Calu3 (cell line): ENCODE measurements at regions of chr21 and their contacts with region 1.

Region 1: GRCh38 chr21:34836103-34836932 is 167.5 kb downstream of the CLIC6 start:
- DNase-seq: peak; percentile 74
- H3K4me3 Mint-ChIP-seq: peak overlapping the region; percentile 65
- H3K27ac Mint-ChIP-seq: peak overlapping the region; percentile 95
- H3K4me1 Mint-ChIP-seq: peaks cover 42% of the 10 kb centered on the region
- H3K27me3 Mint-ChIP-seq: no peaks in the 10 kb centered on the region
- CTCF ChIP-seq: no peak

Region 2: DNA sequence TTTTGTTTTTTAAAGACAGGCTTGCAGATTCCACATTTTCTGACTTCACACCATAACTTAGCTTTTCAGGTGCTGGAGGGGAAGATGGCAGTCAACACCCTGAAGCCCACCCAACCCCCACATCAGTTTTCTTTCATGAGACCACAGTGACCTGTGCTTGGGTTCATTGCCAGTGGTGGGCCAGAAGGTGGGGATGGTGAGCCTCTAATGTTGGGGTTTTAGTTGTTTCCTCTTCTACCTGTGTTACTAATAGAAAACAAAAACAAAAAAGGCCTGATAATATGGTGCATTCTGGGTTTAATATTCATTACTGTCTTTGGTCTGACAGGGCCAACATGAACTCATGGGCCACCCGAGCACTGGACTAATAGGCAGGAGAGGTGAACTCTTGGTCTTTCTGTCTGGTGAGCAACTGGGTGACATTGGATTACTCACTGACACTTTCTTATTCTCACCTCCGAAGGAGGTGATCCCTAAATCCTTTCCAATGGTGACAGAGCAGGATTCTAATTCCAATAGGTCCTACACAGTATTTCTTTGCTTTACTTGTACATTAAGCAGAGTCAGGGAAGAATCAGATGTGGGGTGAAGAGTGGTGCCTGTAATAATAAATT is 34.7 kb before region 1 on chr21:
- CTCF ChIA-PET with region 1: no interaction called
- intact Hi-C with region 1: loop called (anchors 2 kb)
- DNase-seq: peak; percentile 21
- H3K4me3 Mint-ChIP-seq: no peak overlapping the region
- H3K27ac Mint-ChIP-seq: peak overlapping the region; percentile 27
- H3K4me1 Mint-ChIP-seq: peaks cover 82% of the 10 kb centered on the region
- H3K27me3 Mint-ChIP-seq: no peaks in the 10 kb centered on the region
- CTCF ChIP-seq: no peak

Region 3: GRCh38 chr21:34874684-34875513 is 38.6 kb after region 1 on chr21:
- CTCF ChIA-PET with region 1: no interaction called
- intact Hi-C with region 1: loop called (anchors 5 kb)
- DNase-seq: no peak
- H3K4me3 Mint-ChIP-seq: no peak overlapping the region
- H3K27ac Mint-ChIP-seq: no peak overlapping the region
- H3K4me1 Mint-ChIP-seq: peaks cover 28% of the 10 kb centered on the region
- H3K27me3 Mint-ChIP-seq: no peaks in the 10 kb centered on the region
- CTCF ChIP-seq: no peak